Adrenal gland (tissue), 19 donors: ENCODE measurements at regions of chr16 and their contacts with region 1.

Region 1: DNA sequence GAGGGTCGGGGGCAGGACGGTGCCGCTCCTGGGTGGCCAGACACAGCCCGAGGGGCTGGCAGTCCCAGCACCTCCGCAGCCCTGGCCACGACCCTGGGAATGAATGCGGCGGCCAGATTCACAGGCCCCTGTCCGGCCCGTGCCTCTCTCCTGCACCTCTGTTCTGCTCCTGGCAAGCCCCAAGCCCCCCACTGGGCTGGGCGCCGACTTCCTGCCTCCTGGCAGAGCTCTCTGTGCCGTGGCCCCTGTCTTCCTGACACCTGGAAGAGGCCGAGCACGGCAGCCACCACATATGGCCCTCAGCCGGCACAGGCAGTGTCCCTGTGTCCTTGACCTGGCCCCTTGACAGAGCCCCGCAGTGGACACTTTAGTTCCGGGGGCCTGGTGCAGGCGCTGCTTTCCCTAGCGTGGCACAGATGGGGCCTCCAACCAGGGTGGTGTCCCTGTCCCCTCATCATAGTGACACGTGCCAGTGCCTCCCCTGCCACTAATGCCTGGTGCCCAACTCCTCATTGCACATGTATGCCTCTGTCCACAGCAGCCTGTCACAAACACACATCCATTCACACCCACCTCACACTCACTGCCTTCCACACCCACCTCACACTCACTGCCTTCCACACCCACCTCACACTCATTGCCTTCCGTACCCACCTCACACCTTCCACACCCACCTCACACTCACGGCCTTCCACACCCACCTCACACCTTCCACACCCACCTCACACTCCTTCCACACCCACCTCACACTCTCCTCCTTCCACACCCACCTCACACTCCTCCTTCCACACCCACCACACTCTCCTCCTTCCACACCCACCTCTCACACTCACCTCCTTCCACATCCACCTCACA is 110.6 kb upstream of the PLCG2 start:
- DNase-seq: no peak
- H3K4me3 ChIP-seq: no peak overlapping the region
- H3K27ac ChIP-seq: peak overlapping the region in 1 of 5 donors; percentile 34
- H3K4me1 ChIP-seq: peaks cover 0 to 5% of the 10 kb centered on the region in 2 donors
- H3K27me3 ChIP-seq: no peaks in the 10 kb centered on the region
- CTCF ChIP-seq: no peak
- POLR2A ChIP-seq: no peak

Region 2: GRCh38 chr16:81707411-81708265 is 39.2 kb after region 1 on chr16:
- intact Hi-C with region 1: loop called in 1 of 2 experiments (anchors 5 kb)
- DNase-seq: peak in 2 of 7 donors; percentile 39 to 49
- H3K4me3 ChIP-seq: no peak overlapping the region
- H3K27ac ChIP-seq: peak overlapping the region in 3 of 5 donors; percentile 22 to 71 (median 45)
- H3K4me1 ChIP-seq: peaks cover 6 to 19% of the 10 kb centered on the region in 2 donors
- H3K27me3 ChIP-seq: no peaks in the 10 kb centered on the region
- CTCF ChIP-seq: no peak
- POLR2A ChIP-seq: no peak

Region 3: DNA sequence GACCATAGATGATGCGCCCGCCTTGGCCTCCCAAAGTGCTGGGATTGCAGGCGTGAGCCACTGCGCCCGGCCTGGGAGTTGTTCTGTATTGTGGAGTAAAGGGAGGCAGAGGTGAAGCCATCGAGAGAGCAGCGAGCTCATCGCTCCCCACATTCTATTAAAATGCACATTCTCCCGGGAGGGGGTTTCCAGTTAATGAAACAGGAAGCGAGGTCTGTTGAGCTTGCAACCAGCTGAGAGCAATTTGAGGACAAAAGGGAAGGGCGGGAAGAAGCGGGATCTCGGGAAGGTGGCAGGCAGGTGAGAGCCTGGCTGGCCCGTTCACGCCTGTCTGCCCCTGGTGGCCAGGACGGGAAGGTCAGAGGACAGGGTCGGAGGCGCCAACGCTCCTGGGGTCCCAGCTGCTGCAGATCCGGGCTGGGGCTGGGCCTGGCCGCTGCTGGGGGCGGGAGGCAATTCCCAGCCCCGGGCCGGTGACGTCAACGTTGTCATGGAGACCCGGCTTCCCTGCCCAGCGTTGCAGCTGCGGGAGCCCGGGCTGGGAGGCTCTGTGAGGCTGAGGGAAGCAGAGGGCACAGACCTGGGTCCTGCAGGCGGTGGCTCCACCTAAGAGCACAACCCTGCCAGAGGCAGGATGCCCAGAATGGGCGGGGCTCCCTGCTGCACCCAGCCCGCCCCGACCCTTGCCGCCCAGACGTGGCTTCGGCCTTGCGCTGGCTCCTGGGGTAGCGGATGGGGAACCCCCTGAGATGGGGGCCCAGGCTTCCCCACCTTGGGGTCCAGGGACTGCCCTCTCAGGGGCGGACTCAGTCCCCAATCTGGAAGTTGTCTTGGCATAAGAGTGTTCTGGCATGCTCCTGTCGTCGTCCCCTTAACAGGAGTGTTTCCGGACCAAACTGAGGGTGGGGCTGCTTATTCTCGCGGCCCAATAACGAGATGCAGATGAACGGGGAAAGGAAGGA is 61.9 kb after region 1 on chr16:
- intact Hi-C with region 1: no loop called
- DNase-seq: peak; percentile 79 to 92 (median 85)
- H3K4me3 ChIP-seq: peak overlapping the region in 1 of 4 donors; percentile 36
- H3K27ac ChIP-seq: peak overlapping the region in 2 of 5 donors; percentile 52 to 77
- H3K4me1 ChIP-seq: peaks cover 0 to 10% of the 10 kb centered on the region in 2 donors
- H3K27me3 ChIP-seq: no peaks in the 10 kb centered on the region
- CTCF ChIP-seq: peak; percentile 30 to 62 (median 49)
- POLR2A ChIP-seq: no peak